CD14-positive monocyte (primary cell): ENCODE measurements at regions of chr12 and their contacts with region 1.

Region 1: GRCh38 chr12:112409064-112409905 is at the start of gene RPL6:
- DNase-seq: peak; percentile 82 to 91 (median 89)
- H3K4me3 ChIP-seq: peak within 1 kb of the TSS; percentile 86 to 100 (median 98)
- H3K4me3 Mint-ChIP-seq: peak within 1 kb of the TSS; percentile 99
- H3K27ac ChIP-seq: peak within 1 kb of the TSS; percentile 90 to 97
- H3K27ac Mint-ChIP-seq: peak within 1 kb of the TSS; percentile 95 to 100 (median 98)
- H3K4me1 ChIP-seq: peaks cover 9 to 17% of the 10 kb centered on the region in 2 donors
- H3K4me1 Mint-ChIP-seq: peaks cover 21% of the 10 kb centered on the region
- H3K27me3 ChIP-seq: no peaks in the 10 kb centered on the region
- H3K27me3 Mint-ChIP-seq: no peaks in the 10 kb centered on the region
- CTCF ChIP-seq: no peak
- polyA plus RNA-seq, gene RPL6: 201 to 1,124 (median 259) TPM

Region 2: GRCh38 chr12:112130441-112130998 is 278.8 kb before region 1 on chr12:
- intact Hi-C with region 1: loop called (anchors 5 kb)
- DNase-seq: peak; percentile 39 to 76 (median 69)
- H3K4me3 ChIP-seq: peak overlapping the region; percentile 27 to 75 (median 72)
- H3K4me3 Mint-ChIP-seq: peak overlapping the region; percentile 51 to 68
- H3K27ac ChIP-seq: peak overlapping the region in 1 of 2 donors; percentile 89
- H3K27ac Mint-ChIP-seq: peak overlapping the region; percentile 82 to 92 (median 86)
- H3K4me1 ChIP-seq: peaks cover 51 to 77% of the 10 kb centered on the region in 2 donors
- H3K4me1 Mint-ChIP-seq: peaks cover 63% of the 10 kb centered on the region
- H3K27me3 ChIP-seq: no peaks in the 10 kb centered on the region
- H3K27me3 Mint-ChIP-seq: no peaks in the 10 kb centered on the region
- CTCF ChIP-seq: no peak

Region 3: GRCh38 chr12:112514926-112515642 is 105.8 kb after region 1 on chr12:
- intact Hi-C with region 1: no loop called
- DNase-seq: no peak
- H3K4me3 ChIP-seq: no peak overlapping the region
- H3K4me3 Mint-ChIP-seq: no peak overlapping the region
- H3K27ac ChIP-seq: no peak overlapping the region
- H3K27ac Mint-ChIP-seq: no peak overlapping the region
- H3K4me1 ChIP-seq: no peaks in the 10 kb centered on the region
- H3K4me1 Mint-ChIP-seq: no peaks in the 10 kb centered on the region
- H3K27me3 ChIP-seq: no peaks in the 10 kb centered on the region
- H3K27me3 Mint-ChIP-seq: peaks cover 0 to 3% (median 0%) of the 10 kb centered on the region in 3 donors
- CTCF ChIP-seq: no peak